HEK293 (cell line): ENCODE measurements at regions of chr22 and their contacts with region 1.

Region 1: DNA sequence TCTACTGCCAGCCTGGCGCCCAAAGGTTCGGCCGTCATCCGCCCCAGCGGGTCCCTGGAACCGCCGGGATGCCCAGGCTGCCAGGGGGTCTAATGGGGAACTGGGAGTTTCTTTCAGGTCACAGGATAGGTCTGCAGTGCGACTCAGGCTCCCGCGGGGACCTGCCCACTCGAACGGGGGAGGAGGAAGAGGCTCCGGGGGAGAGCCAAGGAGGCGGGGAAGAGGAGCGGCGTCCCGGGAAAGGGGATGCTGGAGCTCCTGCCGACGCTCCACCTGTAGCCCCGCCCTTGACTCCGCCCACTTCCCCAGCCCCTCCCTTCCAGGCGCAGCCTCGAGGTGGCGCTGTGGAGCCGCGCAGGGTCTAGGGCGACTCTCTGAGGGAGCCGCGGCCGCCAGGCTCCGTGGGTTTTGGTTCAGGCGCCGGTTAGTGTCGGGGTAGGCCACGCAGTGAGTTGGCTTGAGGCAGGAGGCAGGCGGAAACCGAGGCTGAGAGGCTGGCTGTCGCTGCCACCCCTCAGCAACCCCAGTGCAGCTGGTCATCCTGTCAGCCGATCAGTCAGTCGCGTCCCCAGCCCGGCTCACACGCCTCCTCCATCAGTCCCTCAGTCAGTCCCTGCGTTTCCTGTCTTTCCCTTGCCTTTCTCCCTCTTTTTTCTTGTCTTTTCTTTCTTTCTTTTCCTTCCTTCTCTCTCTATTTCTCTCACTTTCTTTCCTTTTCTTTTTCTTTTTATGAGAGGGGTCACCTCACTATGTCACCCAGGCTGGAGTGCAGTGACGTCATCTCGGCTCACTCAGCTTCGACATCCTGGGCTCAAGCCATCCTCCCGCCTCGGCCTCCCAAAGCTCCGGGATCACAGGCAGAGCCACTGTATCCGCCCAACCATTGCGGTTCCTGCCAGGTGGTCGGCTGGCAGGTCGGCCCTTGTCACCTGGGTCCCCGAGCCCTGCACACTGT is 26.4 kb downstream of the YWHAH start:
- H3K4me3 ChIP-seq: peak overlapping the region; percentile 47
- H3K27ac ChIP-seq: no peak overlapping the region
- H3K4me1 ChIP-seq: no peaks in the 10 kb centered on the region
- CTCF ChIP-seq: peak; percentile 97

Region 2: GRCh38 chr22:31504282-31504681 is 466.5 kb before region 1 on chr22:
- CTCF ChIA-PET with region 1: no interaction called
- POLR2A ChIA-PET with region 1: no interaction called
- H3K4me3 ChIP-seq: no peak overlapping the region
- H3K27ac ChIP-seq: no peak overlapping the region
- H3K4me1 ChIP-seq: no peaks in the 10 kb centered on the region
- CTCF ChIP-seq: no peak

Region 3: DNA sequence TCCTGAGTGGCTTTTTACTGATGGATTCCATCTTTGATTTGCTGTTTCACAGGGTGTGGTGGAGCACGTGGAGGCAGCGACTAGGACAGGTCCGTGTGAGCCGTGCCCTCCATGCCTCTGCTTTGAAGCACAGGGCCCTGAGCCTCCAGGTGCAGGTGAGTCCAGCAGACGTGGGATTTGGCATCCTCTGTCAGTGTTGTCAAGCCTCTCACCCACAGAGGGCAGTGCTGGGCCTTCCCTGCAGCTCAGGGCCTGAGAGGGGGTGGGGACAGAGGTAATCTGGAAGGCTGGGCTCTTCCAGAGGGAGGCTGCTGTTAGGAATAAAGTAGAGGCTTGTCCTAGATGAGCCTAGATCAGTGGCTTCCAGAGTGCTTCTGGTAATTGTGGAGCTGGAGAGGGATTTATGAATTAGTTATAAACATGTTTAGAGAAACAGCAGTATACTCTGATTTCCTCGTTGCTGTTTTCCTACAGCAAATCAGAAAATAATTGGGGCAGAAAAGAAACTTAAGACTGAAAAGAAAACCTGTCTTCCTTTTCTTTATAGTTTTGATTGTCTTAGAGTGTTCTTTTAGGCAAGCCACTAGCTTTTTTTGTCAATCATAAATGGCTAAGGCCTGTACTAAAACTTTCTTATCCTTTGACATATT is 409.4 kb before region 1 on chr22:
- CTCF ChIA-PET with region 1: interaction called, 12 read pairs
- POLR2A ChIA-PET with region 1: no interaction called
- H3K4me3 ChIP-seq: no peak overlapping the region
- H3K27ac ChIP-seq: 0 out of 2 replicates have a peak overlapping the region, but pooled peaks have one; percentile 30
- H3K4me1 ChIP-seq: no peaks in the 10 kb centered on the region
- CTCF ChIP-seq: peak; percentile 81

Region 4: GRCh38 chr22:31661851-31662656 is 308.7 kb before region 1 on chr22 and contains the start of gene PISD:
- CTCF ChIA-PET with region 1: interaction called, 126 read pairs
- POLR2A ChIA-PET with region 1: interaction called, 17 read pairs
- H3K4me3 ChIP-seq: peak within 1 kb of the TSS; percentile 94
- H3K27ac ChIP-seq: peak within 1 kb of the TSS; percentile 33; the same call in 1 of the 2 replicates
- H3K4me1 ChIP-seq: no peaks in the 10 kb centered on the region
- CTCF ChIP-seq: no peak

Region 5: DNA sequence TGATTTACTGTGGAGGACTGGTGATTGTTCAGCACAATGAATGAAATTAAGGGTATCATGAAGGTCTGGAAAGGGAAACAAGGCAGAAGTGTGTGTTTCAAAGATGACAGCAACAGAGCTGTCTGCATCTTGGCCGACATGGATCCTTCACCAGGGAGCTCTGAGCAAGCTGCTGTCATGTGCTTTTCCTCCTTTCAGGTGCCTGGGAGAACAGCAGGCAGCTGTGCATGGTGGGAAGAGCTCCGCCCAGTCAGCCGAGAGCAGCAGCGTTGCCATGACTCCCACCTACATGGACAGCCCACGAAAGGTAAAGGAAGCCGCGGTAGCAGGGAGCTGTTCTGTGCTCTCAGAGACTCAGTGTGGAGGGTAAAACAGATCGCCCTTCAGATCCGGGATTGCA is 113.5 kb before region 1 on chr22:
- CTCF ChIA-PET with region 1: interaction called, 11 read pairs
- POLR2A ChIA-PET with region 1: no interaction called
- H3K4me3 ChIP-seq: no peak overlapping the region
- H3K27ac ChIP-seq: no peak overlapping the region
- H3K4me1 ChIP-seq: peaks cover 4% of the 10 kb centered on the region
- CTCF ChIP-seq: no peak

Region 6: DNA sequence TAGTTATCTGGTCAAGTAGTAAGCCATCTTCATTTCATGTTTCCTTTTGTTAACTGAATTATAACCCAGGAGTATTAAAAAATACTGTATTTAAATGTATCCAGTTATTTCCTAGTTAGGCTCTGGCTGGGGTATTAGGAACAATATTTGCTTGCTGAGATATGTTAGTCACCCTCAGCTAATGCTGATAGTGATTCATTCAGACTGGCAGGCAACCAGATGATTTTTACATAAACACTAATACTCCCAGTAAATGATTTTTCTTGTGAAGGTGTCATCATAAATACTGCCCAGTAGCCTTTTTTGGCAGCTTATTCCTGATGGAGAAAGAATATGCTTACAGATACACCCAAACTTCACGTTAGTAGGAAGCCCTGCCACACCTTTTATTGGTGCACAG is 18.3 kb before region 1 on chr22:
- CTCF ChIA-PET with region 1: interaction called, 50 read pairs
- POLR2A ChIA-PET with region 1: no interaction called
- H3K4me3 ChIP-seq: no peak overlapping the region
- H3K27ac ChIP-seq: no peak overlapping the region
- H3K4me1 ChIP-seq: no peaks in the 10 kb centered on the region; the same call in none of the 2 replicates
- CTCF ChIP-seq: no peak

Region 7: DNA sequence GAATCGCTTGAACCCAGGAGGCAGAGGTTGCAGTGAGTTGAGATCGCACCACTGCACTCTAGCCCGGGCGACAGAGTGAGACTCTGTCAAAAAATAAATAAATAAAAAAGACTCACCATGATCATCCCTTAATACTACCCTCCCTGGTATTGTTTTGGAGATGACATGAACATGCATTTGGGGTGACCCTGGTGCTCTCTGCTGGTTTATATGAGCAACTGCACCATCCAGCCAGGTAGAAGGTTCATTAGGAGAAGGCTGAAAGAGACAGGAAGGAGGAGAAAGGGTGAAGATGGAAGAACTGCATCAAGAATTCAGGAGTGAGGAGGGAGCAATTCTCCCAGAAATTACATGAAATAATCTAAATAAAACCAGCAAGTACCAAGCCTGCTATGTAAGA is 110.1 kb after region 1 on chr22:
- CTCF ChIA-PET with region 1: interaction called, 309 read pairs
- POLR2A ChIA-PET with region 1: no interaction called
- H3K4me3 ChIP-seq: no peak overlapping the region
- H3K27ac ChIP-seq: no peak overlapping the region
- H3K4me1 ChIP-seq: peaks cover 12% of the 10 kb centered on the region
- CTCF ChIP-seq: peak; percentile 25

Region 8: DNA sequence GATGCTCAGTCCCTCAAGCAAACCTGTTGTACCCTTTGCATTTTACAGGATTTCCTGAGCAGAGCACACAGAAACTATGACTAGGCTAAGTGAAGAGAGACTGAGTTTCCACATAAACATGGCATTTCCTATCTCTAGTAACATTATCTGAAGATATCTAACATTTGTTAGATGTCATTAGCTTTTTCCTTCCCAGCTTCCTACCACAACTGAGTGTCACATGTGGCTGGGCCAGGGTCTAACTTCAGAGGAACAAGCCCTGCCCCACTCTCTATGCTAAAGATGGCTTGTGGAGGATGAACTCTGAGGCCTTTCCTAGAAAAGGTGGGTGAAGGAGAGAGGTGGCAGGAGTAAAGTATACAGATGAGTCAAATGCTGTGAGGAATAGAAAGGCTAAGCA is 171.8 kb after region 1 on chr22:
- CTCF ChIA-PET with region 1: no interaction called
- POLR2A ChIA-PET with region 1: no interaction called
- H3K4me3 ChIP-seq: no peak overlapping the region
- H3K27ac ChIP-seq: no peak overlapping the region
- H3K4me1 ChIP-seq: no peaks in the 10 kb centered on the region
- CTCF ChIP-seq: no peak

Region 9: GRCh38 chr22:32265882-32266767 is 295.4 kb after region 1 on chr22:
- CTCF ChIA-PET with region 1: interaction called, 12 read pairs
- POLR2A ChIA-PET with region 1: no interaction called
- H3K4me3 ChIP-seq: no peak overlapping the region
- H3K27ac ChIP-seq: no peak overlapping the region
- H3K4me1 ChIP-seq: no peaks in the 10 kb centered on the region
- CTCF ChIP-seq: no peak; the same call in 1 of the 2 replicates